Head of caudate nucleus (tissue), 42 donors: ENCODE measurements at regions of chr17 and their contacts with region 1.

Region 1: DNA sequence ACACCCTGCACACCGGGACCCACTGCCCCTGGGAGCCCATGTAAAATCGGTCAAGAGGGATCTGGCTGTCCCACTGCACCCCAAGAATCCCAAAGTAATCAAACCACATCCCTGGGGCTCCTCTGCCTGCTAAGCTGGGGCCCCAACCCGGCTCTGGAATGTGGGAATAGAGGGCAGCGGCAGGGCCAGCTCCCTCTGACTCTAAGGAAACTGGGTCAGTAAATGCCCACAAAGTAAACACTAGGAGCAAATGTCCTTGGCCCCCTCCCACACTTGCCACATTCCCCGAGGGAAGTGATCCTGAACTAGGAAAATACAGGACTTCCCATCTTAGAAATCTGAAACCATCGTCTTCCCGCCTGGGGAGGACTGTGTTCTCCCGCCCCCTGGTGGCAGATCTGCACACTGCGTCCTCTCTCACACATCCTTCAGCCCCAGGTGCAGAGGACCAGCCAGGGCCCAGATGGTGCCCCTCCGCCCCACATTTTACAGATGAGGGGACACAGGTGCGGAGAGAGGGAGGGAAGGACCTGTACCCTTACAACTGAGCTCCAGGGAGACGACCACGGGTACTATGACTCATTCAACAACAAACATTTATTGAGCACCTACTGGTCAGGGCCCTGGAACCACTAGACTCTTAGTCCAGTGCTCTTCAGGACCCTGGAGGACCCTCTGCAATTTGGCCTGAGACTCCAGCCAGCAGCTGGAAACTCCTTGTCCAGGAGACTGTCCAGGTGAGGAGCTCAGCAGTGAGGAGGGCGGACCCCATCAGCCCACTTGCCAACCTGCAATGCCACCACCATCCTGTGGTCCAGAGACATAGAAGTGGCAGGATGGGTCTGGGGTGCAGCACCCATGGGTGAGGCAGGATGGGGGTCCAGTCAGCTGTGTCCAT is 10.1 kb downstream of the P3H4 start:
- DNase-seq: peak; percentile 49 to 96 (median 86)

Region 2: GRCh38 chr17:41648411-41649195 is 153.0 kb before region 1 on chr17:
- intact Hi-C with region 1: no loop called
- DNase-seq: peak; percentile 72 to 93 (median 87)

Region 3: GRCh38 chr17:41738077-41738735 is 63.4 kb before region 1 on chr17:
- intact Hi-C with region 1: loop called (anchors 1 kb)
- DNase-seq: peak; percentile 55 to 94 (median 83)

Region 4: GRCh38 chr17:41768682-41769288 is 32.8 kb before region 1 on chr17:
- intact Hi-C with region 1: no loop called
- DNase-seq: no peak